OCI-LY7 (cell line): ENCODE measurements at regions of chr2 and their contacts with region 1.

Region 1: GRCh38 chr2:194104687-194105086 is 1552.3 kb upstream of the SLC39A10 start:
- DNase-seq: peak; percentile 84
- H3K4me3 ChIP-seq: peak overlapping the region; percentile 35
- H3K27ac ChIP-seq: peak overlapping the region; percentile 90
- H3K4me1 ChIP-seq: peaks cover 42% of the 10 kb centered on the region
- CTCF ChIP-seq: no peak

Region 2: DNA sequence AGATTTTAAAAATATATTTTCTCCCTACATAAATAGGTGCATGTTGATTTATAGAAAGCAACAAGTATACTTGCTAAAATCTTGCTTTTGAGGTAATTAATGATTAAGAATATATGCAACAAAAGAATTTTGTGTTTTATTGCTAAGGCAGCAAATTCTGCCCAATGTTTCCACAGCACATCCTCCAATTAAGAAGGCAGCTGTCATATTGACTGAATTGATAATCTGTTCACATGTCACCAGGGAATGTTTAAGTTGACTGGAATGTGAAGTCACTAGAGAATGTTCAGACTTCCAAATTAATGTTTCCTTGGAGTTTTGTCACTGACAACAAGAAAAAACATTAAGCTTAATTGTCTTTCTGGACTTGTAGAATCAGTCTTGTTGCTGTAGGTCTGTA is 50.4 kb before region 1 on chr2:
- CTCF ChIA-PET with region 1: no interaction called
- POLR2A ChIA-PET with region 1: no interaction called
- intact Hi-C with region 1: no loop called
- DNase-seq: no peak
- H3K4me3 ChIP-seq: no peak overlapping the region
- H3K27ac ChIP-seq: no peak overlapping the region
- H3K4me1 ChIP-seq: no peaks in the 10 kb centered on the region
- CTCF ChIP-seq: no peak

Region 3: DNA sequence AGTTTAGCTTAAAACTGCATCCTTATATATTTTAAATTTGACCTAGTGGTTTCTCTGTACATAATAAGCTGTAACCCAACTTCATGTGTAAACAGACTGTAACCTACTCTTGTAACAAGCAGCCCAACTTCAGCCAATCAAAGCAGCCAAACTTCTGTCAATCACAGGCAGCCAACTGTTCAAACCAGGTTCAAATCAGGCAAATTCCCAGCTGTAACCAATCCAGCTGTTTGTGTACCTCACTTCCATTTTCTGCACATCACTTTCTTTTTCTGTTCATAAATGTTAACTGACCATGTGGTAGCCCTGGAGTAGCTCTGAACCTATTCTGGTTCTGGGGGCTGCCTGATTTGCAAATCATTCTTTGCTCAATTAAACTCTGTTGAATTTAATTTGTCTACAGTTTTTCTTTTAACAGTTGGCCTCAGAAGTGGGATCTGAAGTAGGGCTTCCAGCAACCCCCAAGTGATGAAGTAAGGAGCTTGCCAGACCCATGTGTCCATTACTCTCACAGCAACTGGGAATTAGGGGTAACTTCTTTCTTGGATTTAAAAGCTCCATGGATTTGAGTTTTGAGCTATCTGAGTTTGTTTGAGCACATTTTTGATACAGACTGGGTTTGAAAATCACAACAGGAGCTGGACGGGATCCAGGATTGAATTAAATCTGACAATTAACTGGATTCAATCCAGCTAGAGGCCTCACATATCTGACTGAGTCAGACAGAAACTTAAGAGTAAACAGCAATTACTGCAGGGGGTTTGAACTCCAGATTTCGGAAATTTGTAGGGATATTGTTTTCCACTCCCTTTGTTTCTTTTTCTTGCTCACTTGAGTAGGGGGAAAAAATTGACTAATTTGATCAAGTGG is 17.4 kb before region 1 on chr2:
- CTCF ChIA-PET with region 1: no interaction called
- POLR2A ChIA-PET with region 1: interaction called, 28 read pairs
- intact Hi-C with region 1: no loop called
- DNase-seq: no peak
- H3K4me3 ChIP-seq: no peak overlapping the region
- H3K27ac ChIP-seq: no peak overlapping the region
- H3K4me1 ChIP-seq: peaks cover 10% of the 10 kb centered on the region
- CTCF ChIP-seq: no peak

Region 4: DNA sequence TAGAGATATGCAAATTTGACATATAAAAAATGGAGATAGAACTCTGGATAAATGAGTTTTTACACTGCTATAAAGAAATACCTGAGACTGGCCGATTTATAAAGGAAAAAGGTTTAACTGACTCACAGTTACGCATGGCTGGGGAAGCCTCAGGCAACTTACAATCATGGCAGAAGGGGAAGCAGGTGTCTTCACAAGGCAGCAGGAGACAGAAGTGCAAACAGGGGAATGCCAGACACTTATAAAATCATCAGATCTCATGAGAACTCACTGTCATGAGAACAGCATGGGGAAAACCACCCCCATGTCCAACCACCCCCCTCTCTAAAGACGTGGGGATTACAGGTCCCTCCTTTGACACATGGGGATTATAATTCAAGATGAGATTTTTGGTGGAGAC is 12.2 kb after region 1 on chr2:
- CTCF ChIA-PET with region 1: no interaction called
- POLR2A ChIA-PET with region 1: interaction called, 23 read pairs
- intact Hi-C with region 1: no loop called
- DNase-seq: no peak
- H3K4me3 ChIP-seq: no peak overlapping the region
- H3K27ac ChIP-seq: no peak overlapping the region
- H3K4me1 ChIP-seq: no peaks in the 10 kb centered on the region
- CTCF ChIP-seq: no peak